ENCODE measurements at regions of chr10 and their contacts with region 1.

Region 1: GRCh38 chr10:105956550-105956949 is 1208.0 kb downstream of the SORCS1 start:
- DNase-seq: no peak
- ATAC-seq: no peak

Region 2: DNA sequence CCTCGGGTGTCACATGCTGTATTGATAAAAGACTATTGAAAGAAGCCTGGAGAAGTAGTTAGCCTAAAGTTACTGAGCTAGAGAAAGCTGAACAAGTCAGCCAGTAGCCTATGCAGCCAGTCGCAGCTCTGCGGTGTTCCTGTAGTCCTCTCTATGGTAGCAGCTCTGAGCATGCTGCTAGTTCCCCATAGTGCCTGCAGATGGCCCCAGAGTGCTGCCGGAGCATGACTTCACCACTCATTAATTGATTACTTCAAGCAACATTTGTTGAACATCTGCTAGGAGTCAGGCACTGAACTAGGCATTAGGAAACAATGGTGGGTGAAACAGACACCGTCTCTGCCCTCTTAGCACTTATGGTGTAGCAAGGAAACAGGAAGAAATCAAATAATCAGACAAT is 892.8 kb before region 1 on chr10:
- intact Hi-C with region 1: loop called (anchors 5 kb)
- DNase-seq: peak; percentile 37
- ATAC-seq: peak; percentile 86

Region 3: DNA sequence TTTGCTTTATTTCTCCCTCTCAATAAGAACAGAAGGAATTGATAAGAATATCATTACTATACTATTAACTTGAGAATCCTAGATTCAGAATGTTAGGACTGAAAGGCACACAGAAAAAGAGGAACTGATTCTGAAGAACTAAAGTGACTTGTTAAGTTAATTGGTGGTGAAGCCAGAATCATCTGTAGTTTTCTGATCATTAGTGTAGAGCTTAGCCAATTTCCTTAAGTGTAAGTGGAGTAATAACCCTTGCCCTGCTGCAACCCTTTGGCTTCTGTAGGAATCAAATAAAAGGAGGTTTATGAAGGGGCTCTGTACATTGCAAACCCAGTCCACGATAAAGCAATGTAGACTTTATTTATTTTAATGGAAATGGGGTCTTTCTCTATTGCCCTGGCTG is 129.4 kb before region 1 on chr10:
- intact Hi-C with region 1: no loop called
- DNase-seq: no peak
- ATAC-seq: no peak

Region 4: GRCh38 chr10:105993609-105994008 is 37.1 kb after region 1 on chr10:
- intact Hi-C with region 1: no loop called
- DNase-seq: no peak
- ATAC-seq: no peak

Measured in Right ventricle myocardium superior (tissue), 1 donor.